K562 (cell line): ENCODE measurements at regions of chr17 and their contacts with region 1.

Region 1: DNA sequence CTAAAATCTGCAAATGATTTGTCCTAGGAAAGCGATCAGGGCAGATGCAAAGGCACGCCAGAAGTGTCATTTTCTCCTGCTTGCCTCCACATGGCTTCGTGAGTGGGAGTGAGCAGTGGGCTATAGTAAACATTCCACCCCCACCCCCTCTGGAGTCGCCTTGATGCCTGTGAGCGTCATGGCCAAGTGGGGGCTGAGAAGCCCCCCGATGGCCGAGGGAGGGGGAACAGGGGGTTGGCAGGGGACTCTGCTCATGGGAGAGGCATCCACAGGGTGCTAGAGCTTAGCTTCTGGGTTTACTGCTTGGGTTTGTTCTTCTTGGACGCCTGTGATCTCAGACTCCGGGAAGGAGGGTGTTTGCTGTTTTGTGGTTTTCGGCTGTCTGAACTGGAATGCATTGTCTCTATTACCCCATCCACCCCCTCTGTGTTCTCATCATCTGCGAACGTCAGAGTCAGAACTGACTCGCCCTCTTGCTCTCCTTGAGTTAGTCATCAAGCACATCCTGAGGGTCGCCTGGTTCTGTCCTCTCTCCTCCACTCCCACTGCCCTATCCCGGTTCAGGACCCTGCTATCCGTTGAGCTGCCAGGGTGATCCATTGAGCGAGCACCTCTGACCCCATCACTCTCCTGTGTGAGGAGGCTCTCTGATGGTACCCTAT is 15.4 kb downstream of the TNS4 start:
- DNase-seq: peak in 3 of 4 experiments; percentile 31 to 69 (median 59)
- ATAC-seq: peak; percentile 39
- H3K4me3 ChIP-seq: no peak overlapping the region
- H3K27ac ChIP-seq: peak overlapping the region; percentile 32; the same call in 1 of the 3 replicates
- H3K4me1 ChIP-seq: peaks cover 34 to 35% of the 10 kb centered on the region in 2 experiments
- H3K27me3 ChIP-seq: no peaks in the 10 kb centered on the region
- CTCF ChIP-seq: no peak
- EP300 ChIP-seq: no peak; the same call in 1 of the 2 replicates
- POLR2A ChIP-seq: no peak
- RAD21 ChIP-seq: no peak

Region 2: DNA sequence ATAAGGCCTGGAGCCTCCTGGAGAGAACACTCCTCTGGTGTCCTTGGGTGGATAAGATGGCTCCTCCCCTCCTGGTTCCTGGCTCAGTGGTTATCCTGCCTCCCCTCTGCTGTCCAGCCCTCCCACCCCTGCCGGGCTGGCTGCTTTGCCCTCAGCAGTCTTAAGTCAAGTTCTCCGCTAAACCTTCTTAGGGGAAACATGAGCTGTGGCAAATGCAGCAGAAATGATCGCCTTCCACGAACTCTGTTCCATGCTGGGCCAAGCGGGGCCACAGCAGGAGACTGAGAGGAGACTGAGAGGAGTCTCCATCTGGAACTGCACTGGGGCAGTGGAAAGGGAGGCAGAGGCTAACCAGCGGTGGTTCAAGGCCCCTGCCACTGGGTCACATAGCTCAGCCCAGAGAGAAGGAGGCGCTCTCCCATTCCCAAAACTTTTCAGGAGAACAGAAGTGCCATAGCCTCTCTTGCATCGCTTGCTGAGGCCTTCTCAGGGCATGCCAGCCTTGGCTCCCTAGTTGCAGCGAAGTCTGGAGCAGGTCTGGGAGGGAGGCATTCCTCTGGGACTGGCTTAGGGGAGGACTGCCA is 11.5 kb before region 1 on chr17:
- CTCF ChIA-PET with region 1: interaction called, 3 read pairs
- POLR2A ChIA-PET with region 1: interaction called, 13 read pairs
- in situ Hi-C with region 1: no loop called
- intact Hi-C with region 1: no loop called
- DNase-seq: peak; percentile 53 to 62 (median 57)
- ATAC-seq: peak; percentile 62
- H3K4me3 ChIP-seq: no peak overlapping the region
- H3K27ac ChIP-seq: no peak overlapping the region
- H3K4me1 ChIP-seq: peaks cover 11 to 31% of the 10 kb centered on the region in 2 experiments; a peak in 4 of 5 replicates
- H3K27me3 ChIP-seq: no peaks in the 10 kb centered on the region
- CTCF ChIP-seq: no peak
- EP300 ChIP-seq: no peak
- POLR2A ChIP-seq: no peak
- RAD21 ChIP-seq: no peak

Region 3: DNA sequence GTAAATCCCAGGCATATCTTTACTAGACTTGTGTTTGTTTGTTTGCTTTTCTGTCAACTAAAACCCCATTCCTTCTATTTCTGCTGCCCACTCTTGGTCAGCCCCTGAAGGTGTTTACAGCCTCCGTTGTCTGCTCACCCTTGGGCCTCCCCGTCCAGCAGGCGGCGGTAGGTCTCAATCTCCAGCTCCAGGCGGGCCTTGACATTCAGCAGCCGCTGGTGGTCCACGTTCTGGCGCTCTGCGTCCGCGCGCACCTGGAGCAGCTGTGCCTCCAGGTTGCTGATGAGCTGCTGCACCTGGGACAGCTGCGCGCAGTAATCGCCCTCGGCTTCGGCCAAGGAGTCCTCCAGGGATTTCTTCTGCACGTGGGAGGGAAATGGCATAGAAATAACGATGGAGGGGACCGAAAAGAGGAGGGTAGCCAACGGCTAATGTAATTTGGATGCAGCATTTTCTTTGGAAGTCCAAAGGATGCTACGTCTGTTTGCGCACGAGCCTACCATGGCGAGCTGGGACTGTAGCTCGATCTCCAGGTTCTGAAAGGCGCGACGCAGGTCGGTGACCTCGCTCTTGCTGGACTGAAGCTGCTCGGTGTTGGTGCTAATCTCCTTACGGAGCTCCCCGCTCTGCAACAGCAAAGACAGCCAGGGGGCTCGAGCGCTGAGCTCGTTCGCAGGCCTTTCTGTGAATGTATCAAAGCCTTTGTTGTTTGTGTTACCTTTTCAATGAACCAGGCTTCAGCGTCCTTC is 377.2 kb after region 1 on chr17:
- CTCF ChIA-PET with region 1: no interaction called
- POLR2A ChIA-PET with region 1: no interaction called
- in situ Hi-C with region 1: no loop called
- intact Hi-C with region 1: no loop called
- DNase-seq: no peak
- ATAC-seq: peak; percentile 58; the same call in 2 of the 3 replicates
- H3K4me3 ChIP-seq: no peak overlapping the region
- H3K27ac ChIP-seq: no peak overlapping the region
- H3K4me1 ChIP-seq: peaks cover 0 to 13% of the 10 kb centered on the region in 2 experiments; a peak in 4 of 5 replicates
- H3K27me3 ChIP-seq: no peaks in the 10 kb centered on the region
- CTCF ChIP-seq: peak; percentile 24 to 57 (median 32); a peak in 4 of 6 replicates
- EP300 ChIP-seq: no peak
- POLR2A ChIP-seq: no peak
- RAD21 ChIP-seq: no peak; a peak in 1 of 4 replicates